T-cell (primary cell): ENCODE measurements at regions of chr9 and their contacts with region 1.

Region 1: DNA sequence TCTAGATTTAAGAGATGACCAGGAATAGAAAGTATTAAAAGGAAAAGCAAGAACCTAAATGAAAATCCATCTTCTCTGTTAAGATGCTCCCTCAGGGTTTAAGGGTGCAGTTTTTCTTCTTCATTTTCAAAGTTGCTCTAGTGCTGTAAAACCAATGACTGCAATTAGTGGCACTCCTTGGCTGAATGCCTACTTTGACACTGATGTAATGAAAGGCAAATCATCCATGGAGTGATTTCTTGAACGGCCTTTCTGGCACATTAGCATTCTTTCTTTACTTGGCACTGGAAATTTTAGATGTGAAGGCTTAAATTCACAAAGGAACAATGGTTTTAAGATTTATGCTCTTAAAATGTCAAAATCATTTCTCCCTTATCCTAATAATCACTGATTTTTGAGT is 19.3 kb upstream of the ISCA1 start:
- DNase-seq: no peak
- ATAC-seq: no peak
- H3K4me3 ChIP-seq: no peak overlapping the region
- H3K4me3 Mint-ChIP-seq: no peak overlapping the region
- H3K27ac ChIP-seq: no peak overlapping the region
- H3K27ac Mint-ChIP-seq: peak overlapping the region in 1 of 2 donors; percentile 58
- H3K4me1 ChIP-seq: peaks cover 0 to 5% of the 10 kb centered on the region in 2 experiments
- H3K4me1 Mint-ChIP-seq: peaks cover 27 to 46% (median 28%) of the 10 kb centered on the region in 3 donors
- H3K27me3 ChIP-seq: no peaks in the 10 kb centered on the region
- H3K27me3 Mint-ChIP-seq: no peaks in the 10 kb centered on the region

Region 2: GRCh38 chr9:86135371-86135770 is 166.3 kb before region 1 on chr9:
- CTCF ChIA-PET with region 1: no interaction called
- POLR2A ChIA-PET with region 1: no interaction called
- DNase-seq: peak in 1 of 35 experiments; percentile 3
- ATAC-seq: no peak
- H3K4me3 ChIP-seq: no peak overlapping the region
- H3K4me3 Mint-ChIP-seq: no peak overlapping the region
- H3K27ac ChIP-seq: no peak overlapping the region
- H3K27ac Mint-ChIP-seq: no peak overlapping the region
- H3K4me1 ChIP-seq: no peaks in the 10 kb centered on the region
- H3K4me1 Mint-ChIP-seq: no peaks in the 10 kb centered on the region
- H3K27me3 ChIP-seq: no peaks in the 10 kb centered on the region
- H3K27me3 Mint-ChIP-seq: peaks cover under 1 to 4% of the 10 kb centered on the region in 2 donors

Region 3: DNA sequence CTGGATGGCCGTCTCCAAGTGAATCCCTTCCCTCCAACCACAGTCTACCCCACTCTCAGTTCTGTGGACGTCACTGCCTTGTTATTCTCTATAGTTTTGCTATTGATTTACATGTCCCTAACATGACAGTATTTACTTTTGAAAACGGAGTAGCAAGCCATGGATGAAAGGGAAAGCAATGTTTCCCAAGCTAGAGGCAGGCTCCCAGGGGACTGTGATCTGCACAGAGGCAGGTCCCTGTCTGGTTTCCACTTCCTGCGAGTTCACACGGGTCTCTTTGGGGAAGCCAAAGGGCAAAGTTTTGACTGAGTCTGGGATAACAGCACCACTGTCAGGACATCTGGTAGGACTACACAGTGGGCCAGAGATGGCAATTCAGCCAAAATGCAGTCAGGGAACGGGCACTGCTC is 54.9 kb before region 1 on chr9:
- CTCF ChIA-PET with region 1: no interaction called
- POLR2A ChIA-PET with region 1: no interaction called
- DNase-seq: no peak
- ATAC-seq: no peak
- H3K4me3 ChIP-seq: no peak overlapping the region
- H3K4me3 Mint-ChIP-seq: no peak overlapping the region
- H3K27ac ChIP-seq: no peak overlapping the region
- H3K27ac Mint-ChIP-seq: no peak overlapping the region
- H3K4me1 ChIP-seq: no peaks in the 10 kb centered on the region
- H3K4me1 Mint-ChIP-seq: no peaks in the 10 kb centered on the region
- H3K27me3 ChIP-seq: peaks cover 0 to 3% of the 10 kb centered on the region in 2 experiments
- H3K27me3 Mint-ChIP-seq: peaks cover 0 to 3% of the 10 kb centered on the region in 2 donors

Region 4: GRCh38 chr9:86324308-86324707 is 22.6 kb after region 1 on chr9:
- CTCF ChIA-PET with region 1: interaction called in 1 of 2 experiments, 3 read pairs
- POLR2A ChIA-PET with region 1: interaction called in 1 of 2 experiments, 13 read pairs
- DNase-seq: no peak
- ATAC-seq: no peak
- H3K4me3 ChIP-seq: no peak overlapping the region
- H3K4me3 Mint-ChIP-seq: no peak overlapping the region
- H3K27ac ChIP-seq: no peak overlapping the region
- H3K27ac Mint-ChIP-seq: no peak overlapping the region
- H3K4me1 ChIP-seq: no peaks in the 10 kb centered on the region
- H3K4me1 Mint-ChIP-seq: peaks cover 5 to 10% (median 6%) of the 10 kb centered on the region in 3 donors
- H3K27me3 ChIP-seq: no peaks in the 10 kb centered on the region
- H3K27me3 Mint-ChIP-seq: no peaks in the 10 kb centered on the region